Psoas muscle (tissue), 8 donors: ENCODE measurements at regions of chr19 and their contacts with region 1.

Region 1: GRCh38 chr19:18469069-18469846 is 31.3 kb upstream of the ISYNA1 start:
- DNase-seq: peak; percentile 80 to 87
- ATAC-seq: peak; percentile 34 to 66 (median 46)
- H3K4me3 ChIP-seq: no peak overlapping the region
- H3K27ac ChIP-seq: peak overlapping the region; percentile 78
- H3K4me1 ChIP-seq: peaks cover 75% of the 10 kb centered on the region
- H3K27me3 ChIP-seq: no peaks in the 10 kb centered on the region
- CTCF ChIP-seq: peak; percentile 77

Region 2: GRCh38 chr19:18557474-18558201 is 88.4 kb after region 1 on chr19 and contains the start of gene KXD1:
- intact Hi-C with region 1: no loop called
- DNase-seq: peak; percentile 98 to 99
- ATAC-seq: peak; percentile 98
- H3K4me3 ChIP-seq: peak within 1 kb of the TSS; percentile 88
- H3K27ac ChIP-seq: peak within 1 kb of the TSS; percentile 93
- H3K4me1 ChIP-seq: peaks cover 18% of the 10 kb centered on the region
- H3K27me3 ChIP-seq: no peaks in the 10 kb centered on the region
- CTCF ChIP-seq: no peak
- total RNA-seq, gene KXD1: 38.9 to 76.5 (median 50.8) TPM

Region 3: GRCh38 chr19:18571564-18572300 is 102.5 kb after region 1 on chr19 and contains the start of gene UBA52:
- intact Hi-C with region 1: loop called (anchors 5 kb)
- DNase-seq: peak; percentile 99
- ATAC-seq: peak; percentile 95 to 98 (median 96)
- H3K4me3 ChIP-seq: peak within 1 kb of the TSS; percentile 77
- H3K27ac ChIP-seq: peak within 1 kb of the TSS; percentile 94
- H3K4me1 ChIP-seq: peaks cover 13% of the 10 kb centered on the region
- H3K27me3 ChIP-seq: no peaks in the 10 kb centered on the region
- CTCF ChIP-seq: no peak
- total RNA-seq, gene UBA52: 979 to 1,082 (median 1,028) TPM

Region 4: DNA sequence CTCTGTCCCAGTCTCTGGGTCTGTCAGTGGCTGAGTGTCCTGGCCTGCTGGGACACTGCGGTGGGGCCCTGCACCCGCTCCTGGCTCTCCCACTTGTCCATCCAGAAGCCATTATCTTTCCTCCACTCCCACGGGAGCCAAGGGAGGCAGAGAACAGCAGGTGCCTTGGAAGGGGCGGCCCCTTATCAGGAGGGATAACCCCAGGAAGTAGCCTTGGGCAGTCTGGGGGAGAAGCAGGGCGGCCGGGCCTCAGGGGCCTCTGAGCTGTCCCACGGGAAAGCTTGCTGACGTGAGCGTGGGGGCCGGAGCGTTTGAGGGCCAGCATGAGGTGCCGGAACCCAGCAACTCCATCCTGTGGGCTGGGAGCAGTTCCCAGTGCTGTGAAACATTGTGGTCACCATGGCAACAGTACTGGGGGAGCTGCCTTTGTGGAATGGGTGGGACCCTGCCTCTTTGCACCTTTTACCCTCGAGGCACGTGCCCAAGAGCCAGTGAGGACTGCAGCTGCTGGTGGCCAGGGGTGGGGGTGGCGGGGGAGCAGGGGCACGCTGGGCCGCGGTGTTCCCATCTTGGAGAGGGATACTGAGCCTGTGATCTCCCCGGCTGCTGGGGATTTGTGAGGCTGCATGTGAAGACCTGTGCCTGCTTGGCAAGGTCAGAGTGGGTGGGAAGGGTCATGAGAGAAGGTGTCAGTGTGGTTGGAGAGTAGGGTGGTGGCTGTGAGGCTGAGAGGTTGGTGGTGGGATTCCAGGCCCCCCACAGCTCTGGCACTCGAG is 188.5 kb after region 1 on chr19:
- intact Hi-C with region 1: loop called in 1 of 2 experiments (anchors 10 kb)
- DNase-seq: peak; percentile 69 to 82
- ATAC-seq: peak in 1 of 4 donors; percentile 37
- H3K4me3 ChIP-seq: no peak overlapping the region
- H3K27ac ChIP-seq: peak overlapping the region; percentile 89
- H3K4me1 ChIP-seq: peaks cover 28% of the 10 kb centered on the region
- H3K27me3 ChIP-seq: no peaks in the 10 kb centered on the region
- CTCF ChIP-seq: no peak